ENCODE measurements at regions of chr10 and their contacts with region 1.

Region 1: GRCh38 chr10:35007858-35008301 is 82.3 kb downstream of the CUL2 start:
- DNase-seq: no peak
- H3K4me3 ChIP-seq: no peak overlapping the region
- H3K4me3 Mint-ChIP-seq: no peak overlapping the region
- H3K27ac Mint-ChIP-seq: no peak overlapping the region
- H3K4me1 ChIP-seq: no peaks in the 10 kb centered on the region
- H3K4me1 Mint-ChIP-seq: peaks cover 12% of the 10 kb centered on the region
- H3K27me3 ChIP-seq: no peaks in the 10 kb centered on the region
- H3K27me3 Mint-ChIP-seq: no peaks in the 10 kb centered on the region
- CTCF ChIP-seq: no peak

Region 2: GRCh38 chr10:35027567-35027966 is 19.7 kb after region 1 on chr10:
- CTCF ChIA-PET with region 1: no interaction called
- POLR2A ChIA-PET with region 1: interaction called, 3 read pairs
- intact Hi-C with region 1: loop called (anchors 2 kb)
- DNase-seq: no peak
- H3K4me3 ChIP-seq: no peak overlapping the region
- H3K4me3 Mint-ChIP-seq: no peak overlapping the region
- H3K27ac Mint-ChIP-seq: no peak overlapping the region
- H3K4me1 ChIP-seq: no peaks in the 10 kb centered on the region
- H3K4me1 Mint-ChIP-seq: no peaks in the 10 kb centered on the region
- H3K27me3 ChIP-seq: no peaks in the 10 kb centered on the region
- H3K27me3 Mint-ChIP-seq: no peaks in the 10 kb centered on the region
- CTCF ChIP-seq: peak; percentile 50 to 51

Region 3: GRCh38 chr10:35896001-35896400 is 888.1 kb after region 1 on chr10:
- CTCF ChIA-PET with region 1: no interaction called
- POLR2A ChIA-PET with region 1: no interaction called
- intact Hi-C with region 1: no loop called
- DNase-seq: no peak
- H3K4me3 ChIP-seq: no peak overlapping the region
- H3K4me3 Mint-ChIP-seq: no peak overlapping the region
- H3K27ac Mint-ChIP-seq: no peak overlapping the region
- H3K4me1 ChIP-seq: no peaks in the 10 kb centered on the region
- H3K4me1 Mint-ChIP-seq: no peaks in the 10 kb centered on the region
- H3K27me3 ChIP-seq: no peaks in the 10 kb centered on the region
- H3K27me3 Mint-ChIP-seq: peaks cover 23% of the 10 kb centered on the region
- CTCF ChIP-seq: no peak

Measured in Caco-2 (cell line).